ENCODE measurements at regions of chr3 and their contacts with region 1.

Region 1: GRCh38 chr3:100590114-100590839 is 19.1 kb upstream of the ADGRG7 start:
- DNase-seq: no peak
- ATAC-seq: peak; percentile 75

Region 2: DNA sequence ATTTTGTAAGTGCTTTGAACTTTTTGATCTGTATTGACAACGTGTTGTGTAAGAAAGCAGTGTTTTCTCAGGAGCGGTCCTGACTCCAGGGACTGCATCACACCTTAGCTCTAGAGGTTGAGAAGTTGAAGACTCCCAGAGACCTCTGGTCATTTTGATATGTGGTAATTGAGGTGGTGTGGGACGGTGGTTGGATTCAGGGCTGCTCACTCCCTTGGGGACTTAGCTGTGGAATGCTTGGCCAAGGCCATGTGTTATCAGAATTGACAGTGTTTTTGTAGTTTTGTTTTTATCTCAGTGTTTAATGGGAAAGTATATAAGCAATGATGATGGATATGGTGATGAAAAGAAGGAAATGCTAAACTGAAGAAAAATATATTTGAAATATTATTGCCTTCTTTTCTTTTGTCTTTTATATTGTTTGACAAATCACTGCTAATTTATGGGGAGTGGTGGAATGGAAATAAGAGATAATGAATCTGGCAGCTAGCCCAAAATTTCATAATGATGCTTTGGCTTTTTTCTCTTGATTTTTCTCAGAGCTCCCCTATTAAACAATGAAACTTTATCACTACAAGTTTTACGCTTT is 756.6 kb before region 1 on chr3:
- intact Hi-C with region 1: loop called (anchors 5 kb)
- DNase-seq: no peak
- ATAC-seq: peak; percentile 32

Region 3: DNA sequence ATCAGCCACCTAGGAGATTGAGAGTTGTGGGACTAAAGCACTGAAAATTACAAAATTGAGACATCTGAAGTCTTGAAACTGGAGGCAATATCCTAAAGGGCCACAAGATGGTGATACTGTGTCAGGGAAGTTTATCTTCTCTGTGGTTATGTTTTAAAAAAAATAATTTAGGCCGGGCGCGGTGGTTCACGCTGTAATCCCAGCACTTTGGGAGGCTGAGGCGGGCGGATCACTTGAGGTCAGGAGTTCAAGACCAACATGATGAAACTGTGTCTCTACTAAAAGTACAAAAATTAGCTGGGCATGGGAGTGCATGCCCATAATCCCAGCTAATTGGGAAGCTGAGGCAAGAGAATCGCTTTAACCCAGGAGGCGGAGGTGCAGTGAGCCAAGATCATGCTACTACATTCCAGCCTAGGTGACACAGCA is 273.6 kb before region 1 on chr3:
- intact Hi-C with region 1: loop called (anchors 2 kb)
- DNase-seq: no peak
- ATAC-seq: peak; percentile 60

Region 4: GRCh38 chr3:100463002-100463401 is 127.3 kb before region 1 on chr3:
- intact Hi-C with region 1: loop called (anchors 1 kb)
- DNase-seq: no peak
- ATAC-seq: peak; percentile 68